ENCODE measurements at regions of chr1 and their contacts with region 1.

Region 1: DNA sequence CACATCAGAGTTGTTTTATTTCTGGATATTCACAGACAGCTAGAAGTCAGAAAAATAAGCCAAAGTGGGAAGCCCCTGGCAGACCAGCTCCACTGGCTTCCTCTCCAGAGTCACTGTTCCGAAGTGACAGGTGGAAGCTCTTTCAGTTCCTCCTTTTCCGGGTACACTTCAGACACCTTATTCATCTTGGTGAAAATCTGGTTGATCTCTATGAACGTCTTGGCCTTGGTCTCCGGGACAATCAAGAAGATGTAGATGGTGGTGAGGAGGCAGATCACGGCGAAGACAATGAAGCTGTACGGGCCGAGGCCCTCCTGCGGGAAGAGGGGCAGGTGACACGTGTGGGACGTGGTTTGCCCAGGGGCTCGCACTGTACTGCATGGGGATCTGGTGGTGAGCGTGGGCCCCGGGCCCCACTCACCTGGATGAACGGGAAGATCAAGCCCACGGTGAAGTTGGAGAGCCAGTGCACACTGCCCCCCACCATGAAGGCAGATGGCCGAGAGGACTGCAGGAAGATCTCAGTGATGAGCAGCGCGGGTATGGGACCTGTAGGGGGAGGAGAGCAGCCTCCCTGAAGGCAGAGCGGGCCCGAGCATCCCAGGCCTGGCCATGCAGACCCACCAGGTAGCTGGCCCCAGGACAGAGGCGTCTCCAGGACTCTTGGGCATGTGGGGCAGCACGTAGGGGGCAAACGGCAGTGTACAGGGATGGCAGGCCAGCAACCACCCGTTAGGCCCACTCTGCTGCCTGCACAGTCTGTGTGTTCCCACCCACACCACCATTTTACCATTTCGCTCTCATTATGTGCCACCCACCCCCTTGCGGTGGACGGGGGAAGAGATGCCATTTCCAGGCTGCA is 11.5 kb upstream of the SLC2A7 start:
- DNase-seq: no peak
- ATAC-seq: peak; percentile 62
- H3K4me3 Mint-ChIP-seq: peak overlapping the region; percentile 39
- H3K27ac Mint-ChIP-seq: peak overlapping the region; percentile 82
- H3K4me1 Mint-ChIP-seq: peaks cover 36% of the 10 kb centered on the region
- H3K27me3 Mint-ChIP-seq: no peaks in the 10 kb centered on the region
- CTCF ChIP-seq: no peak

Region 2: DNA sequence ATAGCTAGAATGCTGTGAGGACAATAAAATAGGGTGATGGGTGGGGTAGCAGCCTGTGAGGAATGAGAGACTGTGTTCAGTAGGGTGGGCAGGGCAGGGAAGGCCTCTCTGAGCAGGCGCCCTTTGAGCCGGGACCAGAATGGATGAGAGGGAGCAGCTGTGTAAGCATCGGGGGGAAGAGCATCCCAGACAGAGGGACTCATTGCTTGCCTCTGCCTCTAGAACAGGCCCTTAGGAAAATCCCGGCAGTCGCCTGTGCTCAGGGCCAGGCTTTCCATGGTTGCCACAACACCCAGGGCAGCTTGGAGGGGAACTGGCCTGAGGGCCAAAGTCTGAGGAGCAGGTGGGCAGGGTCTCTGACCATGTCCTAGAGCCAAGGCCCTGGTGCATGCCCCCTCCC is 12.3 kb before region 1 on chr1:
- CTCF ChIA-PET with region 1: no interaction called
- POLR2A ChIA-PET with region 1: no interaction called
- intact Hi-C with region 1: no loop called
- DNase-seq: no peak
- ATAC-seq: no peak
- H3K4me3 Mint-ChIP-seq: no peak overlapping the region
- H3K27ac Mint-ChIP-seq: no peak overlapping the region
- H3K4me1 Mint-ChIP-seq: no peaks in the 10 kb centered on the region
- H3K27me3 Mint-ChIP-seq: no peaks in the 10 kb centered on the region
- CTCF ChIP-seq: no peak

Region 3: GRCh38 chr1:9069326-9070100 is 31.8 kb after region 1 on chr1 and contains the start of gene SLC2A5:
- CTCF ChIA-PET with region 1: no interaction called
- POLR2A ChIA-PET with region 1: interaction called, 7 read pairs
- intact Hi-C with region 1: loop called (anchors 2 kb)
- DNase-seq: peak; percentile 65
- ATAC-seq: peak; percentile 98
- H3K4me3 Mint-ChIP-seq: peak within 1 kb of the TSS; percentile 83
- H3K27ac Mint-ChIP-seq: peak within 1 kb of the TSS; percentile 64
- H3K4me1 Mint-ChIP-seq: peaks cover 71% of the 10 kb centered on the region
- H3K27me3 Mint-ChIP-seq: no peaks in the 10 kb centered on the region
- CTCF ChIP-seq: no peak
- total RNA-seq, gene SLC2A5: 3.6 and 4.5 TPM in 2 replicates

Region 4: GRCh38 chr1:9078015-9078750 is 40.5 kb after region 1 on chr1:
- CTCF ChIA-PET with region 1: no interaction called
- POLR2A ChIA-PET with region 1: interaction called, 4 read pairs
- intact Hi-C with region 1: loop called (anchors 2 kb)
- DNase-seq: no peak
- ATAC-seq: peak; percentile 36
- H3K4me3 Mint-ChIP-seq: peak overlapping the region; percentile 48
- H3K27ac Mint-ChIP-seq: no peak overlapping the region
- H3K4me1 Mint-ChIP-seq: peaks cover 92% of the 10 kb centered on the region
- H3K27me3 Mint-ChIP-seq: peaks cover 7% of the 10 kb centered on the region
- CTCF ChIP-seq: no peak